RWPE1 (cell line): ENCODE measurements at regions of chr5 and their contacts with region 1.

Region 1: GRCh38 chr5:137778772-137779564 is 24.8 kb upstream of the HNRNPA0 start:
- DNase-seq: peak; percentile 45
- H3K27ac ChIP-seq: no peak overlapping the region
- CTCF ChIP-seq: peak; percentile 88

Region 2: GRCh38 chr5:137822158-137822764 is 43.3 kb after region 1 on chr5:
- CTCF ChIA-PET with region 1: interaction called, 10 read pairs
- POLR2A ChIA-PET with region 1: no interaction called
- DNase-seq: peak; percentile 60
- H3K27ac ChIP-seq: no peak overlapping the region
- CTCF ChIP-seq: no peak; the same call in 1 of the 2 replicates

Region 3: DNA sequence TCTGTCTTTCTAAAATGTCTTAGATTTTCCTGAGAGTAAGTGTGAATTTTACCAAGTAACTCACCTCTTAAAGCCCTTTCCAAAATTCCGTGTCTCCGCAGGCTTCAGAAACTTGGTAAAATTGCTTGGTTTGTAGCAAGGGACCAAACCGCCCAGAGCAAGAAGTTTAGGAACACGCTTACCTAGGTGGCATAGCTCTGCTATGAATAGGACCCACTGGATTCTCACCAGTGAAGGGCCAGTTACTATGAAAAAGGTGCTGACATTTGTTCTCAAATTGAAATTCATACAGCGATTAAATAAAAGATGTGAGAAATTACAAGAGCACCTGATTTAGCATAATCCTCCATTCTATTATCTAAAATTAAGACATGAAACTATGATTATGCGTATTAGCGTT is 353.6 kb after region 1 on chr5:
- CTCF ChIA-PET with region 1: interaction called, 11 read pairs
- POLR2A ChIA-PET with region 1: no interaction called
- DNase-seq: no peak
- H3K27ac ChIP-seq: no peak overlapping the region
- CTCF ChIP-seq: no peak